ENCODE measurements at regions of chr11 and their contacts with region 1.

Region 1: GRCh38 chr11:117134431-117134830 is 9.7 kb upstream of the PAFAH1B2 start:
- DNase-seq: no peak
- ATAC-seq: no peak
- H3K4me3 ChIP-seq: no peak overlapping the region
- H3K27ac ChIP-seq: no peak overlapping the region
- H3K4me1 ChIP-seq: peaks cover 0 to 4% (median 0%) of the 10 kb centered on the region in 4 donors
- H3K27me3 ChIP-seq: no peaks in the 10 kb centered on the region
- CTCF ChIP-seq: no peak
- POLR2A ChIP-seq: no peak

Region 2: DNA sequence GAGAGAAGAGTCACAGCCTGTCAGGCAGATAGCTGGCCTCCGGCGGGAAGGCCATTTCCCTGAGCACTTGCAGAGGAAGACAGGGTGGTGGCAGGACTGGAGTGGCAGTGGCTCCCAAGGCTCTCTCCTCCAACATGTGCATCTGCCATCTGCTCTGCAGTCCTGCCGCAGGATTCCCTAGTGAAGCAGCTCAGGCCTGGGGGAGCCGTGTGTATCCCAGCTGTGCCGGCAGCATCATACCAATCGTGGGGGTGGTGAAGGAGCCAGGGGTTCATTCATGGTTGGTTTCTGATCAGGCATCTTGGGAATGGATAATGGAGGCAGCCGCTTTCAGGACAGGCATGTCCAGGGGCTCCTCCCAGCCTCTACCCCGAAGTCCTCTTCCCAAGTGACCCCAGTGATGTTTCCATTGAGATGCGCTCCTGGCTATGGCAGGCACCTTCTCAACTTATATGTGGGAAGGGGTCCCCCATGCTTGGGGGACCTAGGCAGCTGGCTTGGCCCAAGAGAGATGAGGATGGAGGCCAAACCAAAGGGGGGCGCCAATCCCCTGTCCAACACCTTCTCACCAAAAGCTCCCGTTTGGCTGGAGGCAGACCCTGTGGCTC is 70.9 kb after region 1 on chr11:
- intact Hi-C with region 1: loop called in 1 of 2 experiments (anchors 5 kb)
- DNase-seq: no peak
- ATAC-seq: no peak
- H3K4me3 ChIP-seq: no peak overlapping the region
- H3K27ac ChIP-seq: no peak overlapping the region
- H3K4me1 ChIP-seq: no peaks in the 10 kb centered on the region
- H3K27me3 ChIP-seq: no peaks in the 10 kb centered on the region
- CTCF ChIP-seq: no peak
- POLR2A ChIP-seq: no peak